HCT116 (cell line): ENCODE measurements at regions of chr1 and their contacts with region 1.

Region 1: GRCh38 chr1:20696397-20697329 is 21.1 kb downstream of the KIF17 start:
- DNase-seq: peak; percentile 69
- ATAC-seq: peak; percentile 90
- H3K4me3 ChIP-seq: peak overlapping the region; percentile 44 to 62
- H3K27ac ChIP-seq: peak overlapping the region; percentile 88
- H3K4me1 ChIP-seq: peaks cover 25 to 39% of the 10 kb centered on the region in 2 experiments
- H3K27me3 ChIP-seq: no peaks in the 10 kb centered on the region
- CTCF ChIP-seq: peak; percentile 77 to 86 (median 78)
- POLR2A ChIP-seq: no peak
- RAD21 ChIP-seq: peak; percentile 91

Region 2: GRCh38 chr1:20706841-20707240 is 10.2 kb after region 1 on chr1:
- CTCF ChIA-PET with region 1: interaction called, 10 read pairs
- POLR2A ChIA-PET with region 1: no interaction called
- RAD21 ChIA-PET with region 1: no interaction called
- intact Hi-C with region 1: no loop called
- DNase-seq: no peak
- ATAC-seq: no peak
- H3K4me3 ChIP-seq: no peak overlapping the region
- H3K27ac ChIP-seq: no peak overlapping the region
- H3K4me1 ChIP-seq: no peaks in the 10 kb centered on the region
- H3K27me3 ChIP-seq: no peaks in the 10 kb centered on the region
- CTCF ChIP-seq: no peak
- POLR2A ChIP-seq: no peak
- RAD21 ChIP-seq: no peak

Region 3: GRCh38 chr1:20732588-20733360 is 36.1 kb after region 1 on chr1 and contains the start of gene SH2D5:
- CTCF ChIA-PET with region 1: interaction called, 13 read pairs
- POLR2A ChIA-PET with region 1: no interaction called
- RAD21 ChIA-PET with region 1: interaction called, 3 to 5 read pairs
- intact Hi-C with region 1: no loop called
- DNase-seq: peak; percentile 90
- ATAC-seq: peak; percentile 73
- H3K4me3 ChIP-seq: peak within 1 kb of the TSS; percentile 56
- H3K27ac ChIP-seq: peak within 1 kb of the TSS; percentile 93
- H3K4me1 ChIP-seq: peaks cover 17 to 49% of the 10 kb centered on the region in 2 experiments
- H3K27me3 ChIP-seq: no peaks in the 10 kb centered on the region
- CTCF ChIP-seq: peak in 2 of 3 experiments; percentile 20 to 42; a peak in 2 of 6 replicates
- POLR2A ChIP-seq: no peak
- RAD21 ChIP-seq: no peak; the same call in 1 of the 2 replicates
- total RNA-seq, gene SH2D5: 10.4 TPM

Region 4: DNA sequence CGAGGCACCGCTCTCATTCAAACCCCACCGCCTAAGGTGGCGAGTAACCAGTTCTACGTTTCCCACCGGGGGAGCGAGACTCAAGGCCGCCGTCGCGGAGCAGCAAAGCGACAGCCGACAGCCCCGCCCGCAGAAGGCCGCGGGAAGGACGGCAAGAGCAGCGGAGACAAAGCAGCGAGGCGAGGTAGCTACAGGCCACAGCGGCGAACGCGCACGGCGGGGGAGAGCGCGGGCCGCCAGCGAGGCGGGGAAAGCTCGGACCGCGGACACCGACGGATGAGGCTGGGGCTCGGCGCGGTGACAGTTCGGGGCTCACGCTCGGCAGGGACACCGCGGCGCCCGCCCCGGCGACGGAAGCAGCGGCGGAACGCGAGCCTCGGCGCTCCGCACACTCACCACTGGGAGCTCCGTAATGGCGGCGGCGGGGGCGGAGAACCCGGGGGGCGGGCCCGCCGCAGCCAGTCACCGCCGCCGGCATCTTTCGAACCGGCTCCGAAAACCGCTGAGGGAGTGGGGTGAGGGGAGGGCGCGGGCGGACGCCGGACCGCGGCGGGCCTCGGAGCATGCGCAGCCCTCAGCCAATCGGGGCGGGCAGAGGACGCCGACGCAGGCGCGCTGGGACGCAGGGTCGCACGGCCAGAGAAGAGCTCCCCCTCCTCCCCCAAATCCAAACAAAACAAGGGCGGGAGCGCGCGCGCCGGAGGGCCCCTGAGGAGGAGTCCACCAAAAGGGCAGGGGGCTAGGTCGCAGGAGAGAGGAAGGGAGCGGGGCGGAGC is 89.8 kb after region 1 on chr1:
- CTCF ChIA-PET with region 1: interaction called, 8 read pairs
- POLR2A ChIA-PET with region 1: interaction called, 3 read pairs
- RAD21 ChIA-PET with region 1: interaction called in 1 of 2 experiments, 6 read pairs
- intact Hi-C with region 1: loop called (anchors 2 kb)
- DNase-seq: peak; percentile 85
- ATAC-seq: peak; percentile 87
- H3K4me3 ChIP-seq: peak overlapping the region; percentile 88 to 91
- H3K27ac ChIP-seq: peak overlapping the region; percentile 93
- H3K4me1 ChIP-seq: peaks cover 14 to 21% of the 10 kb centered on the region in 2 experiments
- H3K27me3 ChIP-seq: no peaks in the 10 kb centered on the region
- CTCF ChIP-seq: no peak
- POLR2A ChIP-seq: peak; percentile 42
- RAD21 ChIP-seq: no peak

Region 5: DNA sequence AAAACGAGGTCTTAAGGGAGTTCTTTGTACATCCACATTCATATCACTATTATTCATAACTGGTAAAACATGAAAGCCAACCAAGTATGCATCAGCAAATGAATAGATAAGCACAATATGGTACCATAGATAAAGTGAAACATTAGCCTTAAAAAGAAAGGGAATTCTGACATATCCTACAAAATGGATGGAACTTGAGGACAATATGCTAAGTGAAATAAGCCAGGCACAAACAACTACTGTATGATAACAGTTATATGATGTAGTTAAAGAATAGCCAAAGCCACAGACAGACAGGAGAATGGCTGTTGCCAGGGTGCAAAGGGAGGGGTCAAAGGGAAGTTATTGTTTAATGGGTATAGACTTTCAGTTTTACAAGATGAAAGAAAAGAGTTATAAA is 331.1 kb after region 1 on chr1:
- CTCF ChIA-PET with region 1: no interaction called
- POLR2A ChIA-PET with region 1: no interaction called
- RAD21 ChIA-PET with region 1: no interaction called
- intact Hi-C with region 1: no loop called
- DNase-seq: no peak
- ATAC-seq: no peak
- H3K4me3 ChIP-seq: no peak overlapping the region
- H3K27ac ChIP-seq: no peak overlapping the region
- H3K4me1 ChIP-seq: peaks cover 2 to 11% of the 10 kb centered on the region in 2 experiments
- H3K27me3 ChIP-seq: no peaks in the 10 kb centered on the region
- CTCF ChIP-seq: no peak
- POLR2A ChIP-seq: no peak
- RAD21 ChIP-seq: no peak

Region 6: GRCh38 chr1:21115098-21115760 is 418.6 kb after region 1 on chr1:
- CTCF ChIA-PET with region 1: no interaction called
- POLR2A ChIA-PET with region 1: no interaction called
- RAD21 ChIA-PET with region 1: no interaction called
- intact Hi-C with region 1: no loop called
- DNase-seq: no peak
- ATAC-seq: no peak
- H3K4me3 ChIP-seq: no peak overlapping the region
- H3K27ac ChIP-seq: no peak overlapping the region
- H3K4me1 ChIP-seq: no peaks in the 10 kb centered on the region
- H3K27me3 ChIP-seq: no peaks in the 10 kb centered on the region
- CTCF ChIP-seq: no peak
- POLR2A ChIP-seq: no peak
- RAD21 ChIP-seq: no peak

Region 7: GRCh38 chr1:21189906-21190500 is 493.3 kb after region 1 on chr1:
- CTCF ChIA-PET with region 1: interaction called, 104 read pairs
- POLR2A ChIA-PET with region 1: interaction called, 16 read pairs
- RAD21 ChIA-PET with region 1: interaction called, 22 to 25 read pairs
- intact Hi-C with region 1: loop called (anchors 1 kb)
- DNase-seq: no peak
- ATAC-seq: no peak
- H3K4me3 ChIP-seq: no peak overlapping the region
- H3K27ac ChIP-seq: no peak overlapping the region
- H3K4me1 ChIP-seq: peaks cover 3% of the 10 kb centered on the region in 2 experiments; a peak in 3 of 4 replicates
- H3K27me3 ChIP-seq: no peaks in the 10 kb centered on the region
- CTCF ChIP-seq: no peak
- POLR2A ChIP-seq: no peak
- RAD21 ChIP-seq: no peak

Region 8: GRCh38 chr1:21200767-21201166 is 504.1 kb after region 1 on chr1:
- CTCF ChIA-PET with region 1: interaction called, 104 read pairs
- POLR2A ChIA-PET with region 1: interaction called, 16 read pairs
- RAD21 ChIA-PET with region 1: interaction called, 22 to 25 read pairs
- intact Hi-C with region 1: loop called (anchors 1 kb)
- DNase-seq: no peak
- ATAC-seq: no peak
- H3K4me3 ChIP-seq: no peak overlapping the region
- H3K27ac ChIP-seq: no peak overlapping the region
- H3K4me1 ChIP-seq: no peaks in the 10 kb centered on the region
- H3K27me3 ChIP-seq: no peaks in the 10 kb centered on the region
- CTCF ChIP-seq: no peak
- POLR2A ChIP-seq: no peak
- RAD21 ChIP-seq: no peak

Region 9: GRCh38 chr1:21216835-21217811 is 520.5 kb after region 1 on chr1:
- CTCF ChIA-PET with region 1: interaction called, 10 read pairs
- POLR2A ChIA-PET with region 1: no interaction called
- RAD21 ChIA-PET with region 1: no interaction called
- intact Hi-C with region 1: no loop called
- DNase-seq: peak; percentile 38
- ATAC-seq: peak; percentile 76
- H3K4me3 ChIP-seq: no peak overlapping the region
- H3K27ac ChIP-seq: no peak overlapping the region
- H3K4me1 ChIP-seq: peaks cover 2 to 7% of the 10 kb centered on the region in 2 experiments; a peak in 2 of 4 replicates
- H3K27me3 ChIP-seq: no peaks in the 10 kb centered on the region
- CTCF ChIP-seq: peak; percentile 50 to 95 (median 87); a peak in 5 of 6 replicates
- POLR2A ChIP-seq: no peak
- RAD21 ChIP-seq: peak; percentile 67